Heart left ventricle (tissue), 16 donors: ENCODE measurements at regions of chr2 and their contacts with region 1.

Region 1: DNA sequence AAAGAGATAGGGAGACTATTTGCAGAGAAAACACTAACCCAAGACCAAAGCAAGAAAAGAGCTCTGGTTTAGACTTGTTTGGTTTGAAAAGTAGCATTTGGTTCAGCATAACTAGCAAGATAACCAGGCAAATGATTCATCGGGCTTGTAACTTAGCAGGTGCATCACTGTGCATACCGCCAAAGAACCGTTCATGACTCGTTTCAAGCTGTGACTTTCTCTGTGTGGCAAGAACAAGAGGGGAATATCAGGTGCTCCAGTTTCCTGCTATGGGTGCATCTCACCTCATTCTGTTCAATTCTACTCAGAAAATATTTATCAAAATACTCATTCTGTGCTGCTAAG is 244.9 kb downstream of the ETAA1 start:
- DNase-seq: no peak
- ATAC-seq: peak in 2 of 4 donors; percentile 19 to 38
- H3K4me3 ChIP-seq: no peak overlapping the region
- H3K27ac ChIP-seq: peak overlapping the region in 1 of 12 donors; percentile 11
- H3K4me1 ChIP-seq: peaks cover 0 to 22% (median 6%) of the 10 kb centered on the region in 12 donors
- H3K27me3 ChIP-seq: no peaks in the 10 kb centered on the region
- CTCF ChIP-seq: no peak
- POLR2A ChIP-seq: no peak

Region 2: GRCh38 chr2:67561457-67561965 is 80.5 kb before region 1 on chr2:
- intact Hi-C with region 1: loop called in 2 of 10 experiments (anchors 5 kb)
- DNase-seq: peak; percentile 45 to 88 (median 76)
- ATAC-seq: peak; percentile 78 to 95 (median 87)
- H3K4me3 ChIP-seq: no peak overlapping the region
- H3K27ac ChIP-seq: peak overlapping the region; percentile 43 to 91 (median 70)
- H3K4me1 ChIP-seq: peaks cover 0 to 19% (median 7%) of the 10 kb centered on the region in 12 donors
- H3K27me3 ChIP-seq: no peaks in the 10 kb centered on the region
- CTCF ChIP-seq: no peak
- POLR2A ChIP-seq: no peak

Region 3: GRCh38 chr2:68040078-68040477 is 398.1 kb after region 1 on chr2:
- intact Hi-C with region 1: no loop called
- DNase-seq: no peak
- ATAC-seq: no peak
- H3K4me3 ChIP-seq: no peak overlapping the region
- H3K27ac ChIP-seq: no peak overlapping the region
- H3K4me1 ChIP-seq: no peaks in the 10 kb centered on the region
- H3K27me3 ChIP-seq: no peaks in the 10 kb centered on the region
- CTCF ChIP-seq: no peak
- POLR2A ChIP-seq: no peak

Region 4: DNA sequence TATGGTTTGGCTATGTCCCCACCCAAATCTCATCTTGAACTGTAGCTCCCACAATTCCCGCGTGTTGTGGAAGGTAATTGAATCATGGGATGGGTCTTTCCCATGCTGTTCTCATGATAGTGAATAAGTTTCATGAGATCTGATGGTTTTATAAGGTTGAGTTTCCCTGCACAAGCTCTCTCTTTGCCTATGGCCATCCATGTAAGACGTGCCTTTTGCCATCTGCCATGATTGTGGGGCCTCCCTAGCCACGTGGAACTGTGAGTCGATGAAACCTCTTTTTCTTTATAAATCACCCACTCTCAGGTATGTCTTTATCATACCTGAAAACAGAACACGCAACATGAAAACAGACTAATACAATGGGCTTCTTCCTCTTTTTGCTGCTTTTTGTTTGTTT is 432.0 kb after region 1 on chr2:
- intact Hi-C with region 1: no loop called
- DNase-seq: no peak
- ATAC-seq: no peak
- H3K4me3 ChIP-seq: no peak overlapping the region
- H3K27ac ChIP-seq: no peak overlapping the region
- H3K4me1 ChIP-seq: no peaks in the 10 kb centered on the region
- H3K27me3 ChIP-seq: no peaks in the 10 kb centered on the region
- CTCF ChIP-seq: no peak
- POLR2A ChIP-seq: no peak